Panc1 (cell line): ENCODE measurements at regions of chr20 and their contacts with region 1.

Region 1: DNA sequence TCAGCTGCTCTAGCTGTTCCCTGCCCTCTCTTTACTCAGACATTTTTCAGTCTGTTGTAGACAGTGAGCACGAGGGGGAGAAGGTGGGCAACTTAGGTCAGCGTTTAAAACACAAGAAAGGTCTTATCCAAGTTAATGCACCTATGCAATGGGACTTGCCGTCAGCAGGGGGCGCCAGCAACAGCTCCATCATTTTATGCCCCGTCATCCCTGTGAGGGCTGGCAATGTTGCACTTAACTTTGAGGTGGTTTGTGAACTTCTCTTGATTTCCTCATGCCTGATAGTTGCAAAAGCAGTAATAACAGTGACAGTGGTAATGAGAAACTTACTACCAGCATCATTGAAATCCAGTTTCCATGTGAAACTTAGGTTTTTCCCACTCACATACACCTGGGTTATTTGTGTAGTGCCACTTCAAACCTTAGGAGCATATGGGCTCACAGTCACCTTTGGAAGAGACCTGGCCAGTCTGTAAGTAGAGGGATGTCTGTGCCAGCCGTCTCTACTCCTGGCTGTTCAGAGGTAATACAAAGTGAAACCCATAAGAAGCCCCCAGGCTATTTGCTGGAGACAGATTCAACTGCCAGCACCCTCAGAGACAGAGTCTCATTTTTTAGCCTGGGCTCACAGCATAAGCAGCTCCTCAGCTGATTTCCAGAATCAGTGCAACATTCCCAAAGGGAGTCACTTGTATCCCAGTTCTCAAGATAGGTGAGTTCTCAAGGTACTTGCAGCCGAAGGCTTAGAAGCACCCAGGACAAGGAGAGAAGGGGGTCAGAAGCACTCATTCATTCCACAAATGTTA is 44.8 kb upstream of the ID1 start:
- DNase-seq: peak; percentile 84
- ATAC-seq: peak; percentile 56
- H3K4me3 ChIP-seq: no peak overlapping the region
- H3K27ac ChIP-seq: peak overlapping the region; percentile 88
- H3K4me1 ChIP-seq: peaks cover 37% of the 10 kb centered on the region
- H3K27me3 ChIP-seq: no peaks in the 10 kb centered on the region
- CTCF ChIP-seq: peak; percentile 100

Region 2: GRCh38 chr20:31260326-31260932 is 299.9 kb before region 1 on chr20:
- CTCF ChIA-PET with region 1: interaction called, 12 read pairs
- POLR2A ChIA-PET with region 1: no interaction called
- in situ Hi-C with region 1: no loop called
- intact Hi-C with region 1: no loop called
- DNase-seq: peak; percentile 46
- ATAC-seq: peak; percentile 94
- H3K4me3 ChIP-seq: no peak overlapping the region
- H3K27ac ChIP-seq: no peak overlapping the region
- H3K4me1 ChIP-seq: no peaks in the 10 kb centered on the region
- H3K27me3 ChIP-seq: no peaks in the 10 kb centered on the region
- CTCF ChIP-seq: peak; percentile 93

Region 3: GRCh38 chr20:31330893-31331292 is 229.4 kb before region 1 on chr20:
- CTCF ChIA-PET with region 1: no interaction called
- POLR2A ChIA-PET with region 1: no interaction called
- in situ Hi-C with region 1: no loop called
- intact Hi-C with region 1: no loop called
- DNase-seq: no peak
- ATAC-seq: no peak
- H3K4me3 ChIP-seq: no peak overlapping the region
- H3K27ac ChIP-seq: no peak overlapping the region
- H3K4me1 ChIP-seq: no peaks in the 10 kb centered on the region
- H3K27me3 ChIP-seq: peaks cover 7% of the 10 kb centered on the region
- CTCF ChIP-seq: no peak

Region 4: GRCh38 chr20:31403886-31404285 is 156.4 kb before region 1 on chr20:
- CTCF ChIA-PET with region 1: no interaction called
- POLR2A ChIA-PET with region 1: no interaction called
- in situ Hi-C with region 1: no loop called
- intact Hi-C with region 1: no loop called
- DNase-seq: no peak
- ATAC-seq: no peak
- H3K4me3 ChIP-seq: no peak overlapping the region
- H3K27ac ChIP-seq: no peak overlapping the region
- H3K4me1 ChIP-seq: no peaks in the 10 kb centered on the region
- H3K27me3 ChIP-seq: peaks cover 8% of the 10 kb centered on the region; the same call in 1 of the 2 replicates
- CTCF ChIP-seq: no peak

Region 5: DNA sequence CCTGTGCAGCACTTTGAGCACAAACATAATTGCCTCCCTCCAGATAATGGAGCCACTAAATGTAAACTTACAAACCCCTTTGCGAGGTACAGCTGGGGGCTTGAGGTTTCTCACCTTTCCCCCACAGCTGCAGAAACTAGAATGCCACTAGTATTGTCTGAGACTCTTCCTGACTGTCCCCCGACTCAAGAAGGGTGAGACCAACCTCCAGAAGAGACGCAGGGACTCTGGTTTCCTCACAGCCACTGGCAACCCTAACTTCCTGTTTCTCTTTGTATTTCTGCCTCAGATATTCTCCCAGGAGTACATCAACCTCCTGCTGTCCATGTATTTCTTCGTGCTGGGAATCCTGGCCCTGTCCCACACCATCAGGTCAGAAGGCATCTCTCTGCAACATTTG is 22.4 kb before region 1 on chr20:
- CTCF ChIA-PET with region 1: interaction called, 3 read pairs
- POLR2A ChIA-PET with region 1: interaction called, 12 read pairs
- in situ Hi-C with region 1: no loop called
- intact Hi-C with region 1: no loop called
- DNase-seq: no peak
- ATAC-seq: no peak
- H3K4me3 ChIP-seq: no peak overlapping the region
- H3K27ac ChIP-seq: no peak overlapping the region
- H3K4me1 ChIP-seq: no peaks in the 10 kb centered on the region
- H3K27me3 ChIP-seq: no peaks in the 10 kb centered on the region
- CTCF ChIP-seq: no peak

Region 6: DNA sequence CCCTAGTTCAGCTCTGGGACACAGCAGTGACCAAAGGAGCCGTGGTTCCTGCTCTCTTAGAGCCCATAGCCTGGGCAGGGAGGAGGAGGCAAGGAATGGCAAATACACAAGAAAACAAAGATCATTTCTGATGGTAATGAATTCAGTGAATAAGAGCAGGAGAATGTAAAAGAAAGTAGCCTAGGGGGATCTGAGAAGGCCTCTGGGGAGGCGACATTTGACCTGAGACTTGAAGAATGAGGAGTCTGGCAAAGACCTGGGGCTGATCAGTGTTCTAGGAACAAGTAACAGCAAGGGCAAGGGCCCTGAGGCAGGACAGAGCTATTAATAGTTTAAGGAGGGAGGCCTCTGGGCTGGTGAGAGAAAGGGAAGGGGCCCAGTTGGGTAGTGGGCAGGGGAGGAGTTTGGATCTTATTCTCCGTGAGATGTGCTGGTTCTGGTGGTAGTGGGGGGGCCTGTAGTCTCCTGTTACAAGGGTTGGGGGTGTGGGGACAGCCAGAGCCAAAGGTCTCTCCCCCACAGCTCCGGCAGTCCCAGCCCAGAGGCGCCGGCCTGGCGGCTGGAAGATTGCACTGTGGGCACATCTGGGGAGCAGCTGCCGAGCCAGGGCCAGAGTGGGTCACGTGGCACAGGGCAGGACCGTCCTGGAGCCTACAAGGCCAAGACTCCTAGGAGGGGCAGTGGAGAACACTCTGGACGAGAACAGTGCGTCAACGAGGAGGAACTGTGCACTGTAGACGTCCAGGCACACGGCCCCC is 35.5 kb after region 1 on chr20:
- CTCF ChIA-PET with region 1: interaction called, 11 read pairs
- POLR2A ChIA-PET with region 1: interaction called, 9 read pairs
- in situ Hi-C with region 1: no loop called
- intact Hi-C with region 1: no loop called
- DNase-seq: no peak
- ATAC-seq: peak; percentile 74
- H3K4me3 ChIP-seq: peak overlapping the region; percentile 48 to 73
- H3K27ac ChIP-seq: peak overlapping the region; percentile 97
- H3K4me1 ChIP-seq: peaks cover 50% of the 10 kb centered on the region
- H3K27me3 ChIP-seq: no peaks in the 10 kb centered on the region
- CTCF ChIP-seq: no peak

Region 7: GRCh38 chr20:31620252-31620651 is 60.0 kb after region 1 on chr20:
- CTCF ChIA-PET with region 1: interaction called, 5 read pairs
- POLR2A ChIA-PET with region 1: interaction called, 4 read pairs
- in situ Hi-C with region 1: loop called (anchors 10 kb)
- intact Hi-C with region 1: no loop called
- DNase-seq: no peak
- ATAC-seq: no peak
- H3K4me3 ChIP-seq: no peak overlapping the region
- H3K27ac ChIP-seq: no peak overlapping the region
- H3K4me1 ChIP-seq: no peaks in the 10 kb centered on the region
- H3K27me3 ChIP-seq: no peaks in the 10 kb centered on the region
- CTCF ChIP-seq: no peak

Region 8: GRCh38 chr20:31674895-31675827 is 114.9 kb after region 1 on chr20:
- CTCF ChIA-PET with region 1: interaction called, 10 read pairs
- POLR2A ChIA-PET with region 1: no interaction called
- in situ Hi-C with region 1: no loop called
- intact Hi-C with region 1: no loop called
- DNase-seq: no peak
- ATAC-seq: peak; percentile 23
- H3K4me3 ChIP-seq: no peak overlapping the region
- H3K27ac ChIP-seq: peak overlapping the region; percentile 27
- H3K4me1 ChIP-seq: peaks cover 72% of the 10 kb centered on the region
- H3K27me3 ChIP-seq: no peaks in the 10 kb centered on the region
- CTCF ChIP-seq: no peak

Region 9: GRCh38 chr20:31987744-31988143 is 427.4 kb after region 1 on chr20:
- CTCF ChIA-PET with region 1: no interaction called
- POLR2A ChIA-PET with region 1: no interaction called
- in situ Hi-C with region 1: no loop called
- intact Hi-C with region 1: no loop called
- DNase-seq: peak; percentile 59
- ATAC-seq: peak; percentile 58
- H3K4me3 ChIP-seq: no peak overlapping the region
- H3K27ac ChIP-seq: peak overlapping the region; percentile 74
- H3K4me1 ChIP-seq: peaks cover 36% of the 10 kb centered on the region
- H3K27me3 ChIP-seq: no peaks in the 10 kb centered on the region
- CTCF ChIP-seq: no peak